CD4-positive, alpha-beta T cell (primary cell): ENCODE measurements at regions of chr2 and their contacts with region 1.

Region 1: GRCh38 chr2:202033321-202034248 is at the start of gene FZD7:
- DNase-seq: peak; percentile 69 to 91 (median 82)
- ATAC-seq: peak; percentile 78
- H3K4me3 ChIP-seq: peak within 1 kb of the TSS; percentile 95
- H3K4me3 Mint-ChIP-seq: peak within 1 kb of the TSS; percentile 94
- H3K27ac ChIP-seq: no peak within 1 kb of the TSS
- H3K27ac Mint-ChIP-seq: peak within 1 kb of the TSS; percentile 45
- H3K4me1 ChIP-seq: peaks cover 31% of the 10 kb centered on the region
- H3K4me1 Mint-ChIP-seq: peaks cover 12% of the 10 kb centered on the region
- H3K27me3 ChIP-seq: peaks cover 17 to 30% of the 10 kb centered on the region in 2 experiments
- H3K27me3 Mint-ChIP-seq: peaks cover 9% of the 10 kb centered on the region
- CTCF ChIP-seq: no peak
- total RNA-seq, gene FZD7: 0.17 to 0.25 TPM

Region 2: DNA sequence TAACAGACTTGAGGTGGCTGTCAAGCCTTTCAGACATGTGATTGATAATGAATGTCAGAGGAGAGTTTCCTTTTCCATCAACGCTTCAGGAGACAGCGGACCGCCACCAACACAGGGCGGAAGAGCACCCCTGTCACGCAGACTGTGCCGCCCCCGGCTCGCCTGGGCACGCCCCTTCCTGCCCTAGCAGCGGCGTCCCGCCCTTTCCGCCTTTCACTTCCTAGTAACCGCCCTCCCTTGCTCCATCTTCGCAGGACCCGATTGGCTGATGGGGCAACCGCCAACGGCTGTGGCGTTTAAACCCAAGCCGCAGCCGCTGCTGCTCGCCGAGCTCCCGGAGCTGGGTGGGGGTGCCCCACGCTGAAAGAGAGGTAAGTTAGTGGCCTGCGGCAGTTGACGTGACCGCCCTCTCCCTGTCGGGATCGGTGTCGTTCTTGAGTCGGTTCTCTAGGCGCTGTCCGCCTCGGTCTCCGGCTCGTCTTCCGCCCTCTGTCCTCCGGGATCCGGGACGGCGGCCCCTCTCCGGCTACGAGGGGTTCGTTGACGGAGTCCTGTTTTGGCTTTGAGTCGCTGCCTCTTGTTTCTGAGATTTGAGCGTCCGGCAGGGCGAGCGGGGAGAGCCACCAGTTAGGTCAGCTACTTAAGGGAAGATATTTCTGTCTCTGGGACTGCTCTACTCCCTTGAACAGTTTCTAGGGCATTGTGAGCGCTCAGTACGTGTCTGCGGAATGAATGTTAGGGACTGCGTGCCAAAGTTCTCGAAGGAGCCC is 1507.5 kb before region 1 on chr2 and contains the start of gene SGO2:
- CTCF ChIA-PET with region 1: no interaction called
- POLR2A ChIA-PET with region 1: no interaction called
- intact Hi-C with region 1: loop called in 1 of 2 experiments (anchors 10 kb)
- DNase-seq: peak; percentile 90 to 98 (median 94)
- ATAC-seq: peak; percentile 99
- H3K4me3 ChIP-seq: peak within 1 kb of the TSS; percentile 71
- H3K4me3 Mint-ChIP-seq: peak within 1 kb of the TSS; percentile 96
- H3K27ac ChIP-seq: peak within 1 kb of the TSS in 1 of 2 donors; percentile 0
- H3K27ac Mint-ChIP-seq: peak within 1 kb of the TSS; percentile 83
- H3K4me1 ChIP-seq: peaks cover 9% of the 10 kb centered on the region
- H3K4me1 Mint-ChIP-seq: peaks cover 13% of the 10 kb centered on the region
- H3K27me3 ChIP-seq: no peaks in the 10 kb centered on the region
- H3K27me3 Mint-ChIP-seq: no peaks in the 10 kb centered on the region
- CTCF ChIP-seq: no peak
- total RNA-seq, gene SGO2: 0.64 to 0.74 TPM

Region 3: DNA sequence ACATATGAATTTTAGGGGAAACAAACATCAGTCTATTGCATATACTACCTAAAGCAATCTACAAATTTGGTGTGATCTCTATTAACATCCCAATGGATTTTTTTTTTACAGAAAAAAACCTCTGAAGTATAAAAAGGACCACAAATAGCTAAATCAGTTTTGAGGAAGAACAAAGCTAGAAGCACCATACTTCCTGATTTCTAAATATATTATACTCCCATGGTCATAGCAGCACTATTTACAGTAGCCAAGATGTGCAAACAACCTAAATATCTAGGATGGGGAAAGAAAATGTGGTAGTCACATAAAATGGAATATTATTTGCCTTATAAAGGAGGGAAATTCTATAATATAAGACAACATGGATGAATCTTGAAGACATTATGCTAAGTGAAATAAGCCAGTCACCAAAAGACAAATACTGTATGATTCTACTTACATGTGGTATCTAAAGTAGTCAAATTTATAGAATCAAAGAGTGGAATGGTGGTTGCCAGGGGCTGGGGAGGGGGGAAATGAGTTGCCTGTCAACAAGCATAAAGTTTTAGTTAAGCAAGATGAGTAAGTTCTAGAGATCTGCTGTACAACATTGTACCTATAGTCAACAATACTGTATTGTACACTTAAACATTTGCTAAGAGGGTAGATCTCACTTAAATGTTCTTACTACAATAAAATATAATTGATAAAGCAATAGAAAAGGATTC is 790.9 kb before region 1 on chr2:
- CTCF ChIA-PET with region 1: no interaction called
- POLR2A ChIA-PET with region 1: no interaction called
- intact Hi-C with region 1: loop called in 1 of 2 experiments (anchors 10 kb)
- DNase-seq: no peak
- ATAC-seq: no peak
- H3K4me3 ChIP-seq: no peak overlapping the region
- H3K4me3 Mint-ChIP-seq: no peak overlapping the region
- H3K27ac ChIP-seq: peak overlapping the region in 1 of 2 donors; percentile 3
- H3K27ac Mint-ChIP-seq: peak overlapping the region; percentile 69
- H3K4me1 ChIP-seq: peaks cover 37% of the 10 kb centered on the region
- H3K4me1 Mint-ChIP-seq: peaks cover 67% of the 10 kb centered on the region
- H3K27me3 ChIP-seq: no peaks in the 10 kb centered on the region
- H3K27me3 Mint-ChIP-seq: no peaks in the 10 kb centered on the region
- CTCF ChIP-seq: no peak

Region 4: GRCh38 chr2:201642579-201643215 is 390.9 kb before region 1 on chr2:
- CTCF ChIA-PET with region 1: no interaction called
- POLR2A ChIA-PET with region 1: no interaction called
- intact Hi-C with region 1: loop called in 1 of 2 experiments (anchors 5 kb)
- DNase-seq: peak; percentile 68 to 92 (median 80)
- ATAC-seq: peak; percentile 88
- H3K4me3 ChIP-seq: peak overlapping the region; percentile 95
- H3K4me3 Mint-ChIP-seq: peak overlapping the region; percentile 96
- H3K27ac ChIP-seq: peak overlapping the region; percentile 79 to 89
- H3K27ac Mint-ChIP-seq: peak overlapping the region; percentile 96
- H3K4me1 ChIP-seq: peaks cover 9% of the 10 kb centered on the region
- H3K4me1 Mint-ChIP-seq: peaks cover 10% of the 10 kb centered on the region
- H3K27me3 ChIP-seq: no peaks in the 10 kb centered on the region
- H3K27me3 Mint-ChIP-seq: no peaks in the 10 kb centered on the region
- CTCF ChIP-seq: peak; percentile 11

Region 5: DNA sequence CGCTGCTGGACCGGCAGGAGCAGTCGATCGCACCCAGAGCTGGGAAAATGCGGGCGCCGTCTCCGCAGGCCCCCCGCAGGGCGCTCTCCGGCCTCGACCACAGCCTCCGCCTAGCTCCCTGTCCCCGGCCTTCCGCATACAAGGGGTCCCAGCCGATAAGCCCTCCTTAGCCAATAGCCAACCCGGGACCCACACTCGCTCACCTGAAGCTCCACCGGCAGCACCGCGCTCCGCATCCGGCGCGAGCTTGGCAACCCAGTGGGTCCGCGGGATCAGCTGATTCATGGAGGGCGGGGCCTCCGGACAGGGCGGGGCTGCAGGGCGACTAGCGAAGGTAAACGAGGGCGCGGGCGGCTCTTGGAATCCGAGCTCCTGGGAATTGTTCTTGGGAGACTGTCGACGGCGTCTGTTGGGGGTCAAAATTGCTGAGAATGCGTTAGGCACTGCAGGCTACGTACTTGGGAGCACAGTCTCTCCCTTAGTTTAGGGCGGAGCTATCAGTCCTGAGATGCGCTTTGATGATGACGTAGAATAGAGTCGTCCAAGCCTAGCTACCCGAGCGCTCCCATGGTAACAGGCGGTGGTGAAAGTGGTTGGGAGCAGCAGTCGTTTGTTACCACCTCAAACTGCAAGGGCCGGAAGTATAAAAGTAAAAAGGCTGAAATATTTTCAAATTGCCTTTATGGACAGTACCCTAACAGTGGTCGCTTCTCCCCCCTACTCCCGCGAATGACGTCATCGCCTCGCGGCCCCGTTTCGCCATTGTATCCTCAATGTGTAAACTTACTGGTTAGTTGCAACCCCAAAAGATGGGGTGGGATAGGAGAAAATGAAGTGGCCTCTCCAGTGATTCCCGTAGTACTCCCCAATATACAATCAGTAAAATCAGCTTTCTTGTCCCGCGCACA is 252.7 kb before region 1 on chr2 and contains the start of gene ALS2:
- CTCF ChIA-PET with region 1: no interaction called
- POLR2A ChIA-PET with region 1: interaction called, 3 read pairs
- intact Hi-C with region 1: loop called in 1 of 2 experiments (anchors 2 kb)
- DNase-seq: peak; percentile 86 to 96 (median 92)
- ATAC-seq: peak; percentile 90
- H3K4me3 ChIP-seq: peak within 1 kb of the TSS; percentile 66
- H3K4me3 Mint-ChIP-seq: peak within 1 kb of the TSS; percentile 98
- H3K27ac ChIP-seq: peak within 1 kb of the TSS; percentile 77 to 88
- H3K27ac Mint-ChIP-seq: peak within 1 kb of the TSS; percentile 93
- H3K4me1 ChIP-seq: peaks cover 15% of the 10 kb centered on the region
- H3K4me1 Mint-ChIP-seq: peaks cover 20% of the 10 kb centered on the region
- H3K27me3 ChIP-seq: no peaks in the 10 kb centered on the region
- H3K27me3 Mint-ChIP-seq: no peaks in the 10 kb centered on the region
- CTCF ChIP-seq: no peak
- total RNA-seq, gene ALS2: 7.0 to 7.2 TPM

Region 6: GRCh38 chr2:202238234-202239197 is 204.9 kb after region 1 on chr2 and contains the start of gene SUMO1:
- CTCF ChIA-PET with region 1: no interaction called
- POLR2A ChIA-PET with region 1: no interaction called
- intact Hi-C with region 1: loop called in 1 of 2 experiments (anchors 10 kb)
- DNase-seq: peak; percentile 79 to 95 (median 91)
- ATAC-seq: peak; percentile 92
- H3K4me3 ChIP-seq: peak within 1 kb of the TSS; percentile 85
- H3K4me3 Mint-ChIP-seq: peak within 1 kb of the TSS; percentile 98
- H3K27ac ChIP-seq: peak within 1 kb of the TSS; percentile 81 to 88
- H3K27ac Mint-ChIP-seq: peak within 1 kb of the TSS; percentile 98
- H3K4me1 ChIP-seq: peaks cover 23% of the 10 kb centered on the region
- H3K4me1 Mint-ChIP-seq: peaks cover 43% of the 10 kb centered on the region
- H3K27me3 ChIP-seq: no peaks in the 10 kb centered on the region
- H3K27me3 Mint-ChIP-seq: no peaks in the 10 kb centered on the region
- CTCF ChIP-seq: no peak
- total RNA-seq, gene SUMO1: 72.1 to 72.9 TPM